Natural killer cell (primary cell): ENCODE measurements at regions of chr17 and their contacts with region 1.

Region 1: GRCh38 chr17:58121925-58122324 is 26.3 kb upstream of the OR4D1 start:
- DNase-seq: peak in 1 of 2 donors; percentile 81
- ATAC-seq: peak; percentile 54 to 76 (median 73)
- H3K4me3 ChIP-seq: no peak overlapping the region
- H3K4me3 Mint-ChIP-seq: no peak overlapping the region
- H3K27ac ChIP-seq: no peak overlapping the region
- H3K27ac Mint-ChIP-seq: no peak overlapping the region
- H3K4me1 ChIP-seq: no peaks in the 10 kb centered on the region
- H3K4me1 Mint-ChIP-seq: peaks cover 5 to 7% of the 10 kb centered on the region in 2 donors
- H3K27me3 ChIP-seq: no peaks in the 10 kb centered on the region
- H3K27me3 Mint-ChIP-seq: peaks cover 0 to 15% of the 10 kb centered on the region in 2 donors
- CTCF ChIP-seq: peak; percentile 54

Region 2: DNA sequence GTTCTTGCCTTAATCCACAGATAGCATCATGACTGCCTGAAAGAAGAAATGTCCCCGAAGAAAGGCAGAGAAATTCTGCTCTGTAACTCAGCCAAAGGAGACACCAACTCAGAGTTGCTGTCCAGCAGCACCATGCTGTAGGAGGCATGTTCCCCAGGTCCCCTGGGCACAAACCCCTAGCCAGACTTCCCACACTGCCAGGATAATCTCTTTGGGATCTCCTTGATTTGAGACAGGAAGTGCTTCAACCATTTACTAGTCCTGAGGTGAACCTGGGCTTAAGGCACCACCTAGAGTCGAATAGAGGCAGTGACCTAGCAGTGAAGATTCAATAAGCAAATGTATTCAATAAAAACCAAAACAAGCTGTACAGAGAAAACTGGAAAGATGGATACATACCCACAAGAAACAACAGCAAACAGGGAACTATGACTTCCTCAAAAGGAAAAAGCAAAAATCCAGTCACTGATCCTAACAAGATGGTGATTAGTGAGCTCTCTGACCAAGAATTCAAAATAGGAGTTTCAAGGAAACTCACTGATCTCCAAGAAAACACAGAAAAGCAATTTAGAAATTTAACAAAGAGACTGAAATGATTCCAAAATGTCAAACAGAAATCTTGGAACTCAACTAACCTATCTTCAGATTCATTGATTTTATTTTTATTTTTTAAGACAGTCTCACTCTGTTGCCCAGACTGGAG is 50.6 kb after region 1 on chr17:
- intact Hi-C with region 1: loop called (anchors 1 kb)
- DNase-seq: peak in 1 of 2 donors; percentile 82
- ATAC-seq: peak; percentile 76 to 87 (median 86)
- H3K4me3 ChIP-seq: no peak overlapping the region
- H3K4me3 Mint-ChIP-seq: peak overlapping the region; percentile 35
- H3K27ac ChIP-seq: no peak overlapping the region
- H3K27ac Mint-ChIP-seq: peak overlapping the region; percentile 81 to 85
- H3K4me1 ChIP-seq: peaks cover 30% of the 10 kb centered on the region
- H3K4me1 Mint-ChIP-seq: peaks cover 36 to 41% of the 10 kb centered on the region in 2 donors
- H3K27me3 ChIP-seq: no peaks in the 10 kb centered on the region
- H3K27me3 Mint-ChIP-seq: peaks cover 4 to 18% of the 10 kb centered on the region in 2 donors
- CTCF ChIP-seq: peak; percentile 67